ENCODE measurements at regions of chr3 and their contacts with region 1.

Region 1: DNA sequence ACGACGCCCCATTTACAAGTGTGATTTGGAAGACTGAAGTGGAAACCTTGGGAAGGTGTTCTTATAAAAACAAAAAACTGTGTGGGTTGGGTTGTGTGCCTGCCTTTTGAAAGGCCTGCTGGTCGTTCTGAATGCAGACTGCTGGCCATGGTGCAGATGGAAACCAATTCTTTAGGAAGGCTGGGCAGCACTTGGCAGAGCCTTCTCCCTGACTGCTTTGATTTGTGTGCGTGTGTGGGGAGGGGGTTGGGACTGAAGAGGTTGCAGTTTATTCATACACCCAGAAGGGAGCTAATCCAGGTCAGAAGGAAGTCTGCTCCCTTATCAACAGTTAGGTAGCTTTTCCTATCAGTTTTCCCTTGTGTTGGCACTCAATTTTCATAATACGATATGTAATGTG is 288.7 kb downstream of the SOX2 start:
- DNase-seq: no peak
- H3K4me3 ChIP-seq: no peak overlapping the region
- H3K27ac ChIP-seq: no peak overlapping the region
- H3K4me1 ChIP-seq: peaks cover 4% of the 10 kb centered on the region
- H3K27me3 ChIP-seq: no peaks in the 10 kb centered on the region
- CTCF ChIP-seq: no peak

Region 2: DNA sequence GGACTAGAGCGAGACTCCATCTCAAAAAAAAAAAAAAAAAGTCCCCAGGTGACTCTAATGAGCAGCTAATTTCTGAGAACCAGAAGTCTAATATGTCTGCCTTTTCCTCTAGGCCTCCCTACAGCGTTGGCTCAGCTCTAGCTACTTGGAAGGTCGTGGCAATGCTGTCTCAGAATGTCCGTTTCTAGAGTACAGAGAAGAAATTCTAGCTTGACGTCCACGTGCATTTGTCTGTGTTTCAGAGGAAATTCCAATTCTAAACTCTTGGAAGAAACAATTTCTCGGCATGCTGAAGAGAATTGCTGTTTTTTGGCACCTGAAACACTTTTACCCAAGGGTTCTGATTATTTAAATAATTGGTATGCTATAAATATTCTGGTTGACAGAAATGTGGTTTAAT is 209.9 kb before region 1 on chr3:
- CTCF ChIA-PET with region 1: no interaction called
- POLR2A ChIA-PET with region 1: no interaction called
- intact Hi-C with region 1: loop called (anchors 5 kb)
- DNase-seq: no peak
- H3K4me3 ChIP-seq: no peak overlapping the region
- H3K27ac ChIP-seq: no peak overlapping the region
- H3K4me1 ChIP-seq: no peaks in the 10 kb centered on the region
- H3K27me3 ChIP-seq: no peaks in the 10 kb centered on the region
- CTCF ChIP-seq: no peak

Region 3: GRCh38 chr3:182331341-182331740 is 330.9 kb after region 1 on chr3:
- CTCF ChIA-PET with region 1: no interaction called
- POLR2A ChIA-PET with region 1: no interaction called
- intact Hi-C with region 1: no loop called
- DNase-seq: peak; percentile 55
- H3K4me3 ChIP-seq: no peak overlapping the region
- H3K27ac ChIP-seq: no peak overlapping the region
- H3K4me1 ChIP-seq: peaks cover 3% of the 10 kb centered on the region
- H3K27me3 ChIP-seq: no peaks in the 10 kb centered on the region
- CTCF ChIP-seq: no peak

Region 4: GRCh38 chr3:182450942-182451787 is 450.7 kb after region 1 on chr3:
- CTCF ChIA-PET with region 1: no interaction called
- POLR2A ChIA-PET with region 1: no interaction called
- intact Hi-C with region 1: no loop called
- DNase-seq: no peak
- H3K4me3 ChIP-seq: no peak overlapping the region
- H3K27ac ChIP-seq: no peak overlapping the region
- H3K4me1 ChIP-seq: no peaks in the 10 kb centered on the region
- H3K27me3 ChIP-seq: no peaks in the 10 kb centered on the region
- CTCF ChIP-seq: no peak